Adrenal gland (tissue), 19 donors: ENCODE measurements at regions of chr19 and their contacts with region 1.

Region 1: GRCh38 chr19:55503502-55504251 is 15.4 kb downstream of the SSC5D start:
- DNase-seq: peak; percentile 92 to 97 (median 95)
- H3K4me3 ChIP-seq: peak overlapping the region in 1 of 4 donors; percentile 52
- H3K27ac ChIP-seq: peak overlapping the region in 3 of 5 donors; percentile 54 to 81 (median 69)
- H3K4me1 ChIP-seq: no peaks in the 10 kb centered on the region
- H3K27me3 ChIP-seq: no peaks in the 10 kb centered on the region
- CTCF ChIP-seq: peak; percentile 97 to 100 (median 99)
- POLR2A ChIP-seq: peak in 1 of 2 donors; percentile 17

Region 2: DNA sequence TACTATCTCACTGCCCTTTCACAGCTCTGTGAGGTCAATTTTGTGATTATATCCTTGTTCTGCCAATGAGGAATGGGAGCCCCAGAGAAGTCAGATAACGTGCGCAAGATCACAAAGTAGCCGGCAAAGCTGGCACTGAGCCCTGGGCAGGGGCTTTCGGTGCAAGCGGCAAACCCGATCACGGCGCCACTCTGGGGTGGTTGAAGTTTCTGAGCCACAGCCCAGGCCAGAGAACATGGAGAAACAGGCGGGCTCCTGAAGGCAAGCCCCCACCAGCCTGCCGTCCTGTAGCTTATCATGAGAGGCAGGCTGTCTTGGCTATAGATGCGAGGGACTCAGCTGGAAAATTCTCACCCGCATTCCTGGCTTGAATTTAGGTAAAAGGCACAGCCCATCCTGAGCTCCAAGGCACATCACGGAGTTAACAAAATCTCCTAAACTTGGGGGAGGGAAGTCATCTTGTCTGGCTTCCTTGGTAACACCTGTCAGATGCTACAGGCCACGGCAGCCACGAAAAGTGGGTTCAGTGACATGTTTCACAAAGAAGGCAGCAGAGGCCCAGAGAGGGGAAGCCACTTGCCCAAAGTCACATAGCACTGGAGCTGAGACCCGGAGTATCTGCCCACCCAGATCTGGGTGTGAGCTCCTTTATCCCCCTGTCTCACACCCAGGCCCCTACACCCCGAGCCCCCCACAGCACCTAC is 367.1 kb before region 1 on chr19:
- intact Hi-C with region 1: loop called (anchors 5 to 10 kb)
- DNase-seq: no peak
- H3K4me3 ChIP-seq: no peak overlapping the region
- H3K27ac ChIP-seq: no peak overlapping the region
- H3K4me1 ChIP-seq: peaks cover 0 to 5% of the 10 kb centered on the region in 2 donors
- H3K27me3 ChIP-seq: peaks cover 25% of the 10 kb centered on the region
- CTCF ChIP-seq: no peak
- POLR2A ChIP-seq: no peak

Region 3: DNA sequence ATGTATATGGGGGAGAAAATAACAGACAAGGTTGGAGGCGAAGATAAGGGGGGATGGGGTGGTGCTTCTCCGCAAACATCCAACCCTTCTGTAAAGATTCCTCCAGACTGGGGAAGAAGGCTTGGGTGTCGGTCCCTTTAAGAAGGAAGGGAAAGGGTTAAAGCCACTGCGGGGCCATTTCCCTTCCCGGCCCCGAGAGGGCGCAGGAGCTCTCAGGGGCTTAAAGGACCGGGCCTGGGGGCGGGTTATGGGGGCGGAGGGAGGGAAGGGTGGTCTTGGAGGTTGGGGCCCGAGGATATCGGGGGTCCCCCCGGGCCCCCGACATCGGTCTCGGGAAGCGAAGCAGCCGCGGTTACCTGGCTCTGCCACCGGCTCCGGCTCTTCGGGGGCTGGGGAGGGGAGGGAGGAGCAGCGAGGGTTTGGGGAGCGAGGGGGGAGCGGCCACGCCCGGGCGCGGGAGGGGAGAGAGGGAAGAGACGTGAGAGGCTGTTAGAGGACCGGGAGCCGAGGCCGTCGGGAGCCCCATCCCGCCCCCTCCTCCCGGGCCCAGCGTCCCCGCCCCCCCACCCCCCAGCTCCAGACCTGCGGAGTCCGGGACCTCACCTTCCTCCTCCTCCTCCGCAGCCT is 357.5 kb before region 1 on chr19:
- intact Hi-C with region 1: loop called in 1 of 2 experiments (anchors 10 kb)
- DNase-seq: no peak
- H3K4me3 ChIP-seq: no peak overlapping the region
- H3K27ac ChIP-seq: no peak overlapping the region
- H3K4me1 ChIP-seq: peaks cover 0 to 7% of the 10 kb centered on the region in 2 donors
- H3K27me3 ChIP-seq: peaks cover 41% of the 10 kb centered on the region
- CTCF ChIP-seq: peak in 1 of 6 experiments; percentile 8
- POLR2A ChIP-seq: no peak

Region 4: DNA sequence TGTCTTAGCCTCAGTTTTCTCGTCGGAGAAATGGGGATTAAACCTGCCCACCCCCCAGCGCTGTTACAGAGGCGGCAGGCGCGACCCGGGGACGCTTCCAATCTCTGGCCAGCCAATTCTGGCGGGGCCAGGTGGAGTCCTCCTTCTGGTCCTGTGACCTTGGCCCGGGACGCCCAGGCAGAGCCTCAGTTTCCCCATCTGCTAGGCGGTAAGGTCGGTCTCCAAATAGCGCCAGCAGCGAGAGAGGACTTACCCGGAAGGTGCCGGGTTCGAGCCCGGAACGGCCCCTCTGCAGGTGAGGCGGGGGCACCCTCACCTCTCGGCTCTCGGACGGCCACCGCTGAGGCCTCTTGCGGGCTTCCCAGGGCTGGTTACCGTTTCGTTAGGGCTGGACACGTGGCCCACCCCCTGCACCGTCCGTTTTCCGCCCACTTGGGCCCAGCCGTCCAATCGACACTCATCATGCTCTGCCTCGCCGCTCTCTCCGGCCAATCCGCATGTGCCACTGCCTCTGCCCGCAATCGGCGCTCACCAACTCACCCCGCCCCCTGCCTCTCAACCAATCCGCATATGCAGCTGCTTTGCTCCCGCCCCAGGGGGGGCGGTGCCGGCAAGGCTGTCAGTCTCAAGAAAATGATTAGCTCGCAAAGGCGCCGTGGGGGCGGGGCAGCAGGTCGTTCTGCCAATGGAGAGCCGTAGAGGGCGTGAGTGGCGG is 42.3 kb before region 1 on chr19 and contains the start of gene ISOC2:
- intact Hi-C with region 1: loop called (anchors 2 to 5 kb)
- DNase-seq: peak; percentile 100
- H3K4me3 ChIP-seq: peak within 1 kb of the TSS; percentile 26 to 76 (median 55)
- H3K27ac ChIP-seq: peak within 1 kb of the TSS; percentile 78 to 97 (median 95)
- H3K4me1 ChIP-seq: peaks cover 10% of the 10 kb centered on the region in 2 donors
- H3K27me3 ChIP-seq: no peaks in the 10 kb centered on the region
- CTCF ChIP-seq: peak in 1 of 6 experiments; percentile 12
- POLR2A ChIP-seq: peak; percentile 83 to 85
- total RNA-seq, gene ISOC2: 58.2 to 181 (median 78.3) TPM

Region 5: DNA sequence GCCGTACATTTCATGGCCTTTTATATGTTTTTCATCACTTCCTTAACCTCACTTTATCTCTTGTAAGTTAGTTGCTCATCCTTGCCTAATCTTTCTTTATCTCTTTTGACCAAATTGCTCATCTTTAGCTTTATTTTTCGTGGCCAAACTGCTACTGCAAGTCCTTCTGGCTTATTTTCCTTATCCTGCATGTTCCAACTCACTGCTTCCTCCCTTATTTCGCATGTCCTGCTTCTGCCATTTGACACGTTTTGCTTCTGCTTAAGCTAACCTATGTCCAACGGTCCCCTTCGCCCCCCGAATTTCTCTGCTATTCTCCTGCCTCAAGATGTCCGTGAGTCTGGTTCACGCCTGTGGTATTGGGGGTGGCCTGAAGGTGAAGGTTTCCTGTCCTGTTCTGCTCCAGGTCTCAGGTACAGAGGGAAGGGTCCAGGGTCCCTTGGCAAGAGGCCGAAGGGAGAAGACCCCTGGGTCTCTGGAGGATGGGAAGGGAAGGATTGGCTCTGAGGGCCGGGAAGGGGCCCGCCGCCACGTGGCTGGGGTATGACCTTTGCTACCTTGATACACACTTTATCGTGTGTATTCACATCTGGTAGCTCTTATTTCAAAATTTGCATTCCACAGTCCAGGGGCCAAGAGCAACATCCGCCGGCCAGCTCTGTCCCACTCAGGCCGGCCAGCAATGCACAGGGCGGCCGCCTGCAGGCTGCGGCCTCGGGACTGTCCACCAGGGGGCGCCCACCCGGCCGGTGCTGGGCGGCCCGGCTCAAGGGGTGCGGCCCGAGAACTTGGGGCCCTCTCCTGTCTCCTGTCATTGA is 36.2 kb before region 1 on chr19:
- intact Hi-C with region 1: loop called (anchors 2 to 5 kb)
- DNase-seq: peak in 5 of 7 donors; percentile 56 to 71 (median 70)
- H3K4me3 ChIP-seq: no peak overlapping the region
- H3K27ac ChIP-seq: no peak overlapping the region
- H3K4me1 ChIP-seq: peaks cover 0 to 9% of the 10 kb centered on the region in 2 donors
- H3K27me3 ChIP-seq: no peaks in the 10 kb centered on the region
- CTCF ChIP-seq: peak; percentile 81 to 100 (median 94)
- POLR2A ChIP-seq: no peak